ENCODE measurements at regions of chr9 and their contacts with region 1.

Region 1: GRCh38 chr9:503881-504852 is 289.5 kb downstream of the DOCK8 start:
- DNase-seq: peak; percentile 36 to 83
- H3K4me3 ChIP-seq: peak within 1 kb of the TSS; percentile 41 to 86 (median 69)
- H3K27ac ChIP-seq: 0 out of 2 replicates have a peak within 1 kb of the TSS, but pooled peaks have one; percentile 19
- H3K4me1 ChIP-seq: peaks cover 0 to 10% (median 4%) of the 10 kb centered on the region in 4 experiments; a peak in 4 of 7 replicates
- H3K27me3 ChIP-seq: peaks cover 1 to 21% (median 13%) of the 10 kb centered on the region in 4 experiments; a peak in 6 of 7 replicates
- CTCF ChIP-seq: no peak
- EP300 ChIP-seq: no peak
- POLR2A ChIP-seq: 0 out of 3 replicates have a peak, but pooled peaks of 1 of the 2 experiments have one; percentile 33
- RAD21 ChIP-seq: 0 out of 4 replicates have a peak, but pooled peaks of 1 of the 2 experiments have one; percentile 1

Region 2: GRCh38 chr9:272251-273213 is 231.6 kb before region 1 on chr9:
- CTCF ChIA-PET with region 1: no interaction called
- POLR2A ChIA-PET with region 1: no interaction called
- DNase-seq: no peak
- H3K4me3 ChIP-seq: no peak overlapping the region
- H3K27ac ChIP-seq: no peak overlapping the region
- H3K4me1 ChIP-seq: no peaks in the 10 kb centered on the region
- H3K27me3 ChIP-seq: no peaks in the 10 kb centered on the region
- CTCF ChIP-seq: no peak
- EP300 ChIP-seq: no peak
- POLR2A ChIP-seq: no peak
- RAD21 ChIP-seq: no peak

Region 3: GRCh38 chr9:456365-456764 is 47.8 kb before region 1 on chr9:
- CTCF ChIA-PET with region 1: no interaction called
- POLR2A ChIA-PET with region 1: no interaction called
- DNase-seq: no peak
- H3K4me3 ChIP-seq: no peak overlapping the region
- H3K27ac ChIP-seq: no peak overlapping the region
- H3K4me1 ChIP-seq: no peaks in the 10 kb centered on the region
- H3K27me3 ChIP-seq: no peaks in the 10 kb centered on the region
- CTCF ChIP-seq: no peak
- EP300 ChIP-seq: no peak
- POLR2A ChIP-seq: no peak
- RAD21 ChIP-seq: no peak

Region 4: DNA sequence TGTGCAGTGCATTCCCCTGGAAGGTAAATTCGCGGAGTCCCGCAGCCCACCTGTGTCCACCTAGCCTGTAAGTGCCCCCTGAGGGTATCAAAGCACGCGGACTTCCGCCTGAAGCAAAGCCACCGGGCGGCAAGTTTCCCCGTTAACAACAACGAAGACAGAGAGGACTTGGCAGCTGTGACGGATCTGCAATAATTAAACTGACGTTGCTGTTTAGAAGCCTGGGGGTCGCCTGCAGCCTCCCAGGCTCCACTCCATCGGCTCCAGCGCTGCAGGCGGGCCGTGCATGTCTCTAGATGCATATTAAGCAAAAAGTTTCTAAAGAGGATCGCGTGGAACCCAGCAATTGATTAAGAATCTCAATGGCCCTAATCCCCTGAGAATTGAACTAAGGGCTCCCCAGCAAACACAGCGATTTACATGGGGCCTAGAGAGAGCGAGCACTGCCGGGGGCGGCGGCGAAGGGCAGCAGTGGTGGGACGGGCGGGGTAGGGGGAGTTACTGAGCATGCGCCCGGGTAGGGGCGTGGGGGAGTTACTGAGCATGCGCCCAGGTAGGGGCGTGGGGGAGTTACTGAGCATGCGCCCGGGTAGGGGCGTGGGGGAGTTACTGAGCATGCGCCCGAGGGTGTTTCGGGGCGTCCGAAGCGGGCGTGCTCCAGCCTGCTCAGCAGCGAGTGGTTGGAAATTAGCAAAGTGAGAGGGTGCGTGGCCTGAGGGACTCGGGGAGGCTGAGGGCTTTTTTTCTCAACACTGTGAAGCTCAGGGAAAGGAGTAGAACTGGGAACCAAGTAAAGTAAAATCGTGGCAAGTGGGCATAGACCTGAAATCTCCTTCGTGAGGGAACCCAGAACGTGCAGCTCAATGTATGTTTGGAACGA is 34.3 kb before region 1 on chr9:
- CTCF ChIA-PET with region 1: no interaction called
- POLR2A ChIA-PET with region 1: interaction called, 12 read pairs
- DNase-seq: peak; percentile 69 to 84
- H3K4me3 ChIP-seq: peak overlapping the region; percentile 46 to 76 (median 62)
- H3K27ac ChIP-seq: peak overlapping the region; percentile 30; the same call in 1 of the 2 replicates
- H3K4me1 ChIP-seq: peaks cover 3 to 14% (median 10%) of the 10 kb centered on the region in 4 experiments
- H3K27me3 ChIP-seq: peaks cover 0 to 5% (median 2%) of the 10 kb centered on the region in 4 experiments; a peak in 2 of 7 replicates
- CTCF ChIP-seq: no peak
- EP300 ChIP-seq: no peak
- POLR2A ChIP-seq: peak in 1 of 2 experiments; percentile 48; a peak in 1 of 3 replicates
- RAD21 ChIP-seq: no peak

Region 5: GRCh38 chr9:515665-516064 is 11.5 kb after region 1 on chr9:
- CTCF ChIA-PET with region 1: no interaction called
- POLR2A ChIA-PET with region 1: interaction called, 10 read pairs
- DNase-seq: no peak
- H3K4me3 ChIP-seq: no peak overlapping the region
- H3K27ac ChIP-seq: no peak overlapping the region
- H3K4me1 ChIP-seq: peaks cover 0 to 3% (median 1%) of the 10 kb centered on the region in 4 experiments; a peak in 3 of 7 replicates
- H3K27me3 ChIP-seq: no peaks in the 10 kb centered on the region
- CTCF ChIP-seq: no peak
- EP300 ChIP-seq: no peak
- POLR2A ChIP-seq: no peak
- RAD21 ChIP-seq: no peak

Measured in H1 (cell line).